HEK293 (cell line): ENCODE measurements at regions of chr6 and their contacts with region 1.

Region 1: GRCh38 chr6:5143634-5144311 is 58.6 kb downstream of the PPP1R3G start:
- H3K4me3 ChIP-seq: no peak overlapping the region
- H3K27ac ChIP-seq: no peak overlapping the region
- H3K4me1 ChIP-seq: peaks cover 4% of the 10 kb centered on the region; the same call in 1 of the 2 replicates
- CTCF ChIP-seq: peak; percentile 66

Region 2: DNA sequence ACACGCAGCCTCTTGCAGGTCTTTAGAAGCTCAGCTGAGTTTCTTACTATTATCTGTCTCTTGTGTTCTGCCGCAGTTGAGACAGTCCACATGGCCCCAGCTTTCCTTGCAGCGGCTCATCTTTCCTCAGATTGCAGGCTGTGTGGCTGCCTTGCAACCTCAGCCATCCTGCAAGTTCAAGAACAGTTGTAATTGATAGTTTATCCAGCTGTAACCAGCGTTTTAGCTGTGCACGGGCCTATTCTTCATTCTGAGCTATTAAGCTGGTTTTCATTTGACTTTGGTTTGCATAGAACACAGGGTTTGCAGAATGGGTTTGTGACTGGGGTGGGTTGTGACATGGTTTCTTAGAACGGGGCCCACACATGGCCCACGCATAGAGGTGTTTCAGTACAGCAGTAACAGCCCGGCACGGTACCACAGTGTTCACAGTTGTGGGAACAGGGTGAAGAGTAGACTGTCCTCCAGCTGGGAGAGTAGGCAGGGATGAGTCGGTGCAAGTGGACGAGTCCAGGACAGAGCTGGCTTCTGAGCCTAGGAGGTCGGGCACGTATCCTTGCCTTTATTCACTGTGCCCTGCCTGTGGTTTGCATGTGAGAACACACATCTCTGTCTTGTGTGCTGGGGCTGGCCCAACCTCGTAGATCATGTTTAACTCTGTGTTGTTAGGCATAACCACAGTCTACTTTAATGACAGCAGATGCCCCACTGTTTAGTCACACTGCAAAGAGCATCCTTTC is 229.2 kb before region 1 on chr6:
- CTCF ChIA-PET with region 1: no interaction called
- POLR2A ChIA-PET with region 1: no interaction called
- H3K4me3 ChIP-seq: no peak overlapping the region
- H3K27ac ChIP-seq: no peak overlapping the region
- H3K4me1 ChIP-seq: peaks cover 8% of the 10 kb centered on the region
- CTCF ChIP-seq: no peak

Region 3: GRCh38 chr6:5053038-5053437 is 90.7 kb before region 1 on chr6:
- CTCF ChIA-PET with region 1: interaction called, 34 read pairs
- POLR2A ChIA-PET with region 1: no interaction called
- H3K4me3 ChIP-seq: no peak overlapping the region
- H3K27ac ChIP-seq: no peak overlapping the region
- H3K4me1 ChIP-seq: no peaks in the 10 kb centered on the region
- CTCF ChIP-seq: no peak

Region 4: GRCh38 chr6:5132731-5133341 is 10.9 kb before region 1 on chr6:
- CTCF ChIA-PET with region 1: interaction called, 16 read pairs
- POLR2A ChIA-PET with region 1: no interaction called
- H3K4me3 ChIP-seq: no peak overlapping the region
- H3K27ac ChIP-seq: no peak overlapping the region
- H3K4me1 ChIP-seq: no peaks in the 10 kb centered on the region
- CTCF ChIP-seq: no peak

Region 5: GRCh38 chr6:5167501-5167900 is 23.7 kb after region 1 on chr6:
- CTCF ChIA-PET with region 1: interaction called, 22 read pairs
- POLR2A ChIA-PET with region 1: interaction called, 4 read pairs
- H3K4me3 ChIP-seq: no peak overlapping the region
- H3K27ac ChIP-seq: no peak overlapping the region
- H3K4me1 ChIP-seq: peaks cover 2% of the 10 kb centered on the region; the same call in 1 of the 2 replicates
- CTCF ChIP-seq: no peak

Region 6: DNA sequence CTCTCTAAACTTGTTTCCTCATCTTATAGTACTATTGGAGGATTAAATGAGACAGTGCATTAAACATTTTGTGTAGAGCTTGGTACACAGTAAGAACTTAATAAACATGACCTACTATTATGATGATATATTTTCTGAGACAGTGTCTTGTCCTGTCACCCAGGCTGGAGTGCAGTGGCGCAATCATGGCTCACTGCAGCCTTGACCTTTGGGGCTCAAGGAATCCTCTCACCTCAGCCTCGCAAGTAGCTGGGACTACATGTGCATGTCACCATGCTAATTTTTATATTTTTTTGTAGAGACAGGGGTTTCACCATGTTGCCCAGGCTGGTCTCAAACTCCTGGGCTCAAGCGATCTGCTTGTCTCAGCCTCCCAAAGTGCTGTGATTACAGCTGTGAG is 44.9 kb after region 1 on chr6:
- CTCF ChIA-PET with region 1: interaction called, 11 read pairs
- POLR2A ChIA-PET with region 1: no interaction called
- H3K4me3 ChIP-seq: no peak overlapping the region
- H3K27ac ChIP-seq: no peak overlapping the region
- H3K4me1 ChIP-seq: peaks cover 3% of the 10 kb centered on the region; the same call in 1 of the 2 replicates
- CTCF ChIP-seq: no peak

Region 7: GRCh38 chr6:5214570-5215052 is 70.8 kb after region 1 on chr6:
- CTCF ChIA-PET with region 1: interaction called, 34 read pairs
- POLR2A ChIA-PET with region 1: interaction called, 3 read pairs
- H3K4me3 ChIP-seq: no peak overlapping the region
- H3K27ac ChIP-seq: no peak overlapping the region
- H3K4me1 ChIP-seq: no peaks in the 10 kb centered on the region
- CTCF ChIP-seq: peak; percentile 77

Region 8: DNA sequence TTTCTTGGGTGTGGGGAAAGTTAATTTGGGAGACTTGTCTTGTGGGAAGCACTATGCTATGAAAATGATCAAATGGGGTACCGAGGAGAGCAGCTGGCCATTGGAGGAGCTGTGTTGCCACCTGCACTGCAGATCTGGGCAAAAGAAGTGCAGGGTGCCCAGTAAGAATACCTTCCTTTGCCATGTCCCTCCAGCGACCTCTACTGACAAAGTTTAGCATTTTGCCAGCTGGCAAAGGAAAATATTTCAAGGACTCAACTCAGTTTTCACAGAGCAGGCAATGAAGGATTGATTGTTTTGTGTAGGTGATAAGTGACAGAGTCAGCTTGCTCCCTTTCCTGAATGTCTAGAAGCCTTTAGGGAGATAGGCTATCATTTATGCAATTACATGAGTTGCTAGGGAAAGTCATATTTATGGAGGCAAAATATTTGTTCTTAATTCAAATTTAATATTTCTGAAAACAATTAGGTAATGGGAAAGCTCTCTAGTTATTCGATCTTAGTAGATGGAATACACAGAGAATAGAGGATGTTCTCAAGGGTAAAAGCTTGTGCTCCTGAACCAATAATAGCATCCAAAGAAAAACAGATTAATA is 236.0 kb after region 1 on chr6:
- CTCF ChIA-PET with region 1: interaction called, 57 read pairs
- POLR2A ChIA-PET with region 1: no interaction called
- H3K4me3 ChIP-seq: no peak overlapping the region
- H3K27ac ChIP-seq: no peak overlapping the region
- H3K4me1 ChIP-seq: no peaks in the 10 kb centered on the region
- CTCF ChIP-seq: peak; percentile 73